HEK293 (cell line): ENCODE measurements at regions of chr15 and their contacts with region 1.

Region 1: DNA sequence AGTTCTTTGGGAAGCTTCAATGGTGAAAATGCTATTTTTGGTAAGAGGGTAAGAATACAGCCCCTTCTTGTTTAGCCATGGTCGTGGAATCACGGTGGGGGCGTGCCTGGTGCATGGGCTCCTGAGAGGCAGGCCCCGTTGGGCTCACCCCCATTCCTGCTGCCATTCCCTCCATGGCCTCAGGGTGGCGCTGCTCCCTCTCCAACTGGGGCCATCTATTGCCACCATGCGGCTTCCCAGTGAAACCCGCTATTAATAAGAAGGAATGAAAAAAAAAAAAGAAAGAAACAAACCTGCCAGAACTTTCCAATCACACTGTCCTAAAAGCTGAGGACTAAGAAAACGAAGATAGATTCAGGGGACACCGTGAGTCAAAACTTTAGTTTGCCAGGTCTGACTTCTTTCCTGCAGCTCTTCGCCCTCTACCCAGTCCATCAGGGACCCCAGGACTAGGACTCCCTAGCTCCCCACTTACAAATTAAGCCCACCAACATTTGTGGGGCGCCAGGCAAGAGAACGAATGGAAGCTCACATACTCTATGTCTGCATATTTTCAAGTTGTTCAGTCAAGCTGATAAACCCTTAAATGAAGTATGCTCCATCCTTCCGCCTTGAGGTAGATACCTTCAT is 30.6 kb upstream of the ABHD2 start:
- H3K4me3 ChIP-seq: no peak overlapping the region
- H3K27ac ChIP-seq: no peak overlapping the region
- H3K4me1 ChIP-seq: no peaks in the 10 kb centered on the region
- CTCF ChIP-seq: peak; percentile 87; the same call in 1 of the 2 replicates

Region 2: GRCh38 chr15:89041507-89041906 is 16.1 kb before region 1 on chr15:
- CTCF ChIA-PET with region 1: interaction called, 18 read pairs
- POLR2A ChIA-PET with region 1: no interaction called
- H3K4me3 ChIP-seq: no peak overlapping the region
- H3K27ac ChIP-seq: no peak overlapping the region
- H3K4me1 ChIP-seq: no peaks in the 10 kb centered on the region; the same call in 1 of the 2 replicates
- CTCF ChIP-seq: no peak

Region 3: DNA sequence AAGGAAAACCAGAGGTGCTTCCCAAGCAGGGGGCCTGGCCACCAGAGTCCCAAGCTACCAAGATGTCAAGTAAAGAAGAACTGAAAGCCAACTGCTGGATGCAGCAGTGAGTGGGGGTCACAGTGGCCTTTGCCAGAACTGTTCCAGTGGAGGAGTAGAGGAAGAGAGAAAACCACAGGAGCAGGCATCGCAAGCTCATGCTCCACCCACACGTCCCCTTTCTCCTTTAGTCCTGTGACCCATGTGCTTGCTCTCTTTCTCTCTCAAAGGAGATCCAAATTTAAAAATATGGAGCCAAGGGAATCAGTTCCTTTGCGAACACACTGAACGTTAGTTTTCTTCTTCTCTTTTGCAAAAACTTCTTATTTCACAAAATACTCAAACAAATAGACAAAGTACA is 18.2 kb after region 1 on chr15:
- CTCF ChIA-PET with region 1: interaction called, 27 read pairs
- POLR2A ChIA-PET with region 1: interaction called, 4 read pairs
- H3K4me3 ChIP-seq: no peak overlapping the region
- H3K27ac ChIP-seq: no peak overlapping the region
- H3K4me1 ChIP-seq: no peaks in the 10 kb centered on the region
- CTCF ChIP-seq: no peak

Region 4: DNA sequence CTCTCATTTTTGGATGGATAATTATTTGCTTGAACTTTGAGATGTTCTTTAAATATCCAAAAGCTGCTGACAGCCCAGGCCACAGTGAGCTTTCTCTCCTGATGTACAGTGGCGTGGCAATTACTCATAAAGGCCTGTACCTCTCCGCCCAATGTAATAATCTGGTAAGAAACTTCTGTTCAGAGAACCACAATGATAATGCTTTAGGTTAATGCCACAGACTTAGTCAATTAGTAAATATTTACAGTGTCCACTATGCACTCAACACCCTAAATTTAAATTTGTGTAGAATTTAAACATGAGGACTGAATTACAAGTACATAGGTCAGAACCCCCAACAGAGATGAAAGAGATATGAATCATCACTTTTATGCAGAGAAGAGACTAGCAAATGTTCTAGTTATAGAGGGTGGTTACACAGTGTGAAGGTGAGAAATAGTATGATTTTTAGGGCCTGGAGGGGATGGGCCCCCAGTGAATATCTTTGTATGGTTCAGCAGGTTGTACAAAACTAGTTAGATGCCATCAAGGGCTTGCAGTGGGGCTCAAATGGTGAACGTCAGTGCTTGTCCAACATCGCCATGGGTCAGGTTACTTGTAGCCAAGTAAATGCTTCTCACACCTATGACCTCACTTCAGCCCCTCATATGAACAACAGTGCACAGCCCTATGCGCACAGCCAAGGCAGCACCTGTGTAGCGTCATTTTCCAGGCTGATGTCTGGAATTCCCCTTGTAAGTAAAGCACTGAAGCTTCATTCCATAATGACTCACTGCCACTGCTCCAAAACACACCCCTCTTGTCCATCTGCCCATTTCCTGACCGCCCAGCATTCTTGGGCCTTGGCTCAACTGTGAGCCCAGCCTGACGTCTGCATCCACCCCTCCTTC is 43.9 kb after region 1 on chr15:
- CTCF ChIA-PET with region 1: interaction called, 17 read pairs
- POLR2A ChIA-PET with region 1: no interaction called
- H3K4me3 ChIP-seq: no peak overlapping the region
- H3K27ac ChIP-seq: no peak overlapping the region
- H3K4me1 ChIP-seq: peaks cover 22% of the 10 kb centered on the region
- CTCF ChIP-seq: no peak

Region 5: GRCh38 chr15:89129123-89129815 is 71.7 kb after region 1 on chr15:
- CTCF ChIA-PET with region 1: interaction called, 120 read pairs
- POLR2A ChIA-PET with region 1: no interaction called
- H3K4me3 ChIP-seq: no peak overlapping the region
- H3K27ac ChIP-seq: no peak overlapping the region
- H3K4me1 ChIP-seq: no peaks in the 10 kb centered on the region
- CTCF ChIP-seq: peak; percentile 18; the same call in 1 of the 2 replicates

Region 6: DNA sequence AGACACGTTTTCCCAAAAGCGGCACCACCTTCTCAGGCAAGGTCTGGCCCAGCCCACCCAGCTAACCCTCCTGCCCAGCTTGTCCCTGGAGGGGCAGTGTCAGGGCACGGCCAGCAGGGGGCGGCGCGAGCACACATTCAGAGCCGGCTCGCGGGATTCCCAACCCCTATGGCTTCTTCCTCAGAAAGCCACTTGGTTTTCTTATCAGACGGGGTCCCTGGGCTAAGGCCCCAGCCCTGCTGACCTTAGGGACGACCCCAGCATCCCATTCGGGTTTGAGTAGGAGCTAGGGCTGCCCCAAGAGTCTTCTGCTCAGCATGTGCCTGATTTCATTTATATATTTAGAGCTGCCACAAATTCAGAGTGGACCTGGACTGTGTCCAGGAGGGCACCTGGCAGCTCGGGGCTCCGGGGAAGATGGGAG is 149.3 kb after region 1 on chr15:
- CTCF ChIA-PET with region 1: interaction called, 21 read pairs
- POLR2A ChIA-PET with region 1: no interaction called
- H3K4me3 ChIP-seq: no peak overlapping the region
- H3K27ac ChIP-seq: no peak overlapping the region
- H3K4me1 ChIP-seq: no peaks in the 10 kb centered on the region
- CTCF ChIP-seq: peak; percentile 74